CD8-positive, alpha-beta T cell (primary cell): ENCODE measurements at regions of chr15 and their contacts with region 1.

Region 1: DNA sequence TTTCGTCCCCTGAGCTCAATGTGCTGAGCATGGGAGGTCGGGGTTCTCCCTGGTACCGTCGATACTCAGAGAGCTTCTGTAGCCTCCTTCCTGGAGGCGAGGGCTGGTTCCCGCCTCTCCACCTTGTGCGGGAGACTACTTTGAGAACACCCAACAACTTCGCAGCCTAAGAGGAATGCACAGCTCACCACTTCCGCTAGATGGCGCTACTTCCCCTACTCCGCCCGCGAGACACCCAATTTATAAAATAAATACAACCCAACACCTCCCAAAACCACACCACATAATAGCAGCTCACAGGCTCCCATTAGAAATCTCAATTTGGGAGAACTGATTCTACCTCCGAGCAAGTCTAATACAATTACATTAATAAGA is 1.2 kb downstream of the RGMA start:
- DNase-seq: peak; percentile 44 to 83 (median 62)
- ATAC-seq: peak; percentile 71
- H3K4me3 ChIP-seq: peak overlapping the region; percentile 20 to 32
- H3K4me3 Mint-ChIP-seq: peak overlapping the region; percentile 76
- H3K27ac ChIP-seq: no peak overlapping the region
- H3K27ac Mint-ChIP-seq: no peak overlapping the region
- H3K4me1 ChIP-seq: peaks cover 6% of the 10 kb centered on the region
- H3K4me1 Mint-ChIP-seq: peaks cover 20% of the 10 kb centered on the region
- H3K27me3 ChIP-seq: peaks cover 19% of the 10 kb centered on the region in 2 experiments
- H3K27me3 Mint-ChIP-seq: peaks cover 59% of the 10 kb centered on the region
- CTCF ChIP-seq: peak; percentile 80

Region 2: GRCh38 chr15:93030430-93031105 is 57.2 kb before region 1 on chr15:
- CTCF ChIA-PET with region 1: interaction called, 10 read pairs
- POLR2A ChIA-PET with region 1: no interaction called
- intact Hi-C with region 1: no loop called
- DNase-seq: peak; percentile 40 to 80 (median 67)
- ATAC-seq: peak; percentile 85
- H3K4me3 ChIP-seq: no peak overlapping the region
- H3K4me3 Mint-ChIP-seq: no peak overlapping the region
- H3K27ac ChIP-seq: no peak overlapping the region
- H3K27ac Mint-ChIP-seq: no peak overlapping the region
- H3K4me1 ChIP-seq: peaks cover 14% of the 10 kb centered on the region
- H3K4me1 Mint-ChIP-seq: peaks cover 26% of the 10 kb centered on the region
- H3K27me3 ChIP-seq: no peaks in the 10 kb centered on the region
- H3K27me3 Mint-ChIP-seq: no peaks in the 10 kb centered on the region
- CTCF ChIP-seq: peak; percentile 82

Region 3: GRCh38 chr15:93060336-93061263 is 27.2 kb before region 1 on chr15:
- CTCF ChIA-PET with region 1: interaction called, 10 read pairs
- POLR2A ChIA-PET with region 1: no interaction called
- intact Hi-C with region 1: no loop called
- DNase-seq: no peak
- ATAC-seq: no peak
- H3K4me3 ChIP-seq: no peak overlapping the region
- H3K4me3 Mint-ChIP-seq: no peak overlapping the region
- H3K27ac ChIP-seq: no peak overlapping the region
- H3K27ac Mint-ChIP-seq: no peak overlapping the region
- H3K4me1 ChIP-seq: no peaks in the 10 kb centered on the region
- H3K4me1 Mint-ChIP-seq: peaks cover 5% of the 10 kb centered on the region
- H3K27me3 ChIP-seq: no peaks in the 10 kb centered on the region
- H3K27me3 Mint-ChIP-seq: peaks cover 9% of the 10 kb centered on the region
- CTCF ChIP-seq: no peak

Region 4: GRCh38 chr15:93102211-93102610 is 14.4 kb after region 1 on chr15:
- CTCF ChIA-PET with region 1: interaction called, 13 read pairs
- POLR2A ChIA-PET with region 1: no interaction called
- intact Hi-C with region 1: no loop called
- DNase-seq: no peak
- ATAC-seq: no peak
- H3K4me3 ChIP-seq: no peak overlapping the region
- H3K4me3 Mint-ChIP-seq: no peak overlapping the region
- H3K27ac ChIP-seq: no peak overlapping the region
- H3K27ac Mint-ChIP-seq: no peak overlapping the region
- H3K4me1 ChIP-seq: no peaks in the 10 kb centered on the region
- H3K4me1 Mint-ChIP-seq: no peaks in the 10 kb centered on the region
- H3K27me3 ChIP-seq: no peaks in the 10 kb centered on the region
- H3K27me3 Mint-ChIP-seq: peaks cover 2% of the 10 kb centered on the region
- CTCF ChIP-seq: no peak

Region 5: GRCh38 chr15:93283854-93284253 is 196.0 kb after region 1 on chr15:
- CTCF ChIA-PET with region 1: no interaction called
- POLR2A ChIA-PET with region 1: no interaction called
- intact Hi-C with region 1: no loop called
- DNase-seq: no peak
- ATAC-seq: no peak
- H3K4me3 ChIP-seq: no peak overlapping the region
- H3K4me3 Mint-ChIP-seq: no peak overlapping the region
- H3K27ac ChIP-seq: no peak overlapping the region
- H3K27ac Mint-ChIP-seq: no peak overlapping the region
- H3K4me1 ChIP-seq: no peaks in the 10 kb centered on the region
- H3K4me1 Mint-ChIP-seq: no peaks in the 10 kb centered on the region
- H3K27me3 ChIP-seq: no peaks in the 10 kb centered on the region
- H3K27me3 Mint-ChIP-seq: peaks cover 24% of the 10 kb centered on the region
- CTCF ChIP-seq: no peak

Region 6: DNA sequence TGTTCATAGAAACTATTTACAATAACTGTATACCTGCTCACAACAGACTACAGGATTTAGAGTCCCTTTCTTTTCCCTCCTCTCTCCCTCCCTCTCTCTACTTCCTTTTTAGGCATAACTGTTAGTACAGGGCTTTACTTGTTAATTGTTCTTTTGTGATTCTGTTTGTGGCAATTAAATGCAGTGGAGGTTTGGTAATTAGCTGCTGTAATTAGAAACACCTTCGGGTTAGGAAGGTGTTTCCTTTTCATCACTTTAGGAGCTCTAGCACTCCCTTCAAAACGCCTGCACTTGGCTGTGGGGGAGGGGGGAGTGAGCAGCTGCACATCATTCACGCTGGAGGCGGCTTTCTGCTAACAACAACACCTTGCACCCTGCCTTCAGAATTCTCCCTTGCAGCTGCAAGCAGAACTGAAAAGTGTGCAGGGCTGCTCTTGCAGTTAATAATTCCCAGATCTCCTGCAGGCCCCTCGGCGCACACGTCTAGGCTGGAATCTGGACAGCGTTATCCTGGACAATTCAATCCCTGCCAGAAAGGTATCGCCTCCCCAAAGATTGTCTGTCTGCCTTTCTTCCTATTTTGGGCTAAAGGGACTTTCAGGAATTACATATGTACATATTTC is 243.8 kb after region 1 on chr15:
- CTCF ChIA-PET with region 1: interaction called, 3 read pairs
- POLR2A ChIA-PET with region 1: no interaction called
- intact Hi-C with region 1: loop called in 1 of 2 experiments (anchors 10 kb)
- DNase-seq: no peak
- ATAC-seq: no peak
- H3K4me3 ChIP-seq: no peak overlapping the region
- H3K4me3 Mint-ChIP-seq: no peak overlapping the region
- H3K27ac ChIP-seq: no peak overlapping the region
- H3K27ac Mint-ChIP-seq: no peak overlapping the region
- H3K4me1 ChIP-seq: no peaks in the 10 kb centered on the region
- H3K4me1 Mint-ChIP-seq: peaks cover 2% of the 10 kb centered on the region
- H3K27me3 ChIP-seq: peaks cover 0 to 6% of the 10 kb centered on the region in 2 experiments
- H3K27me3 Mint-ChIP-seq: peaks cover 47% of the 10 kb centered on the region
- CTCF ChIP-seq: no peak

Region 7: GRCh38 chr15:94119923-94120775 is 1032.3 kb after region 1 on chr15:
- CTCF ChIA-PET with region 1: no interaction called
- POLR2A ChIA-PET with region 1: no interaction called
- intact Hi-C with region 1: loop called in 1 of 2 experiments (anchors 2 kb)
- DNase-seq: peak; percentile 2 to 80 (median 24)
- ATAC-seq: peak; percentile 94
- H3K4me3 ChIP-seq: no peak overlapping the region
- H3K4me3 Mint-ChIP-seq: no peak overlapping the region
- H3K27ac ChIP-seq: no peak overlapping the region
- H3K27ac Mint-ChIP-seq: no peak overlapping the region
- H3K4me1 ChIP-seq: no peaks in the 10 kb centered on the region
- H3K4me1 Mint-ChIP-seq: no peaks in the 10 kb centered on the region
- H3K27me3 ChIP-seq: no peaks in the 10 kb centered on the region
- H3K27me3 Mint-ChIP-seq: no peaks in the 10 kb centered on the region
- CTCF ChIP-seq: peak; percentile 66